ENCODE measurements at regions of chr7 and their contacts with region 1.

Region 1: DNA sequence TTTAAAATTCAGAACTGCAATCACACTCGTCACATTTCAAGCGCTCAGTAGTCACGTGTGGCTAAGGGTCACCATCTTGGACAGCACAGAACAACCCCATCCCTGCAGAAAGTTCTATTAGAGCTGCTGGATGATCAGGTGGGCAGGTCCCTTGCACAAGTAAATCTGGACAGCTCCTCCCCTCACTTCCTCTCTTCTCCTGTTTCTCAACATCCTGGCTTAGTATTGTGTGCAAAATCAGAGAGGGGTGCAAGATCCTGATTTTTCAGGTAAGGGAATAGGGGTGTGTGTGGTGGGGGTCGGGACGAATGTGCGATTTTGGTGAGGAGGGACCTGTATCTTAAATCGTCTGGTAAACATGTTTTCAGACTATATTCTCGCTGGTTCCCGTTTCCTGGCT is at the start of gene GIMAP4:
- DNase-seq: peak; percentile 55
- H3K4me3 Mint-ChIP-seq: peak within 1 kb of the TSS; percentile 94
- H3K27ac Mint-ChIP-seq: peak within 1 kb of the TSS; percentile 98
- H3K4me1 Mint-ChIP-seq: peaks cover 65% of the 10 kb centered on the region
- H3K27me3 Mint-ChIP-seq: no peaks in the 10 kb centered on the region
- total RNA-seq, gene GIMAP4: 128 to 140 TPM

Region 2: DNA sequence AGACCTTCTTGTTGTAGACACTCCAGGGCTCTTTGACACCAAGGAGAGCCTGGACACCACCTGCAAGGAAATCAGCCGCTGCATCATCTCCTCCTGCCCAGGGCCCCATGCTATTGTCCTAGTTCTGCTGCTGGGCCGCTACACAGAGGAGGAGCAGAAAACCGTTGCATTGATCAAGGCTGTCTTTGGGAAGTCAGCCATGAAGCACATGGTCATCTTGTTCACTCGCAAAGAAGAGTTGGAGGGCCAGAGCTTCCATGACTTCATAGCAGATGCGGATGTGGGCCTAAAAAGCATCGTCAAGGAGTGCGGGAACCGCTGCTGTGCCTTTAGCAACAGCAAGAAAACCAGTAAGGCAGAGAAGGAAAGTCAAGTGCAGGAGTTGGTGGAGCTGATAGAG is 47.0 kb before region 1 on chr7:
- CTCF ChIA-PET with region 1: interaction called, 3 read pairs
- POLR2A ChIA-PET with region 1: interaction called, 26 read pairs
- intact Hi-C with region 1: loop called (anchors 1 kb)
- DNase-seq: peak; percentile 64
- H3K4me3 Mint-ChIP-seq: peak overlapping the region; percentile 83
- H3K27ac Mint-ChIP-seq: peak overlapping the region; percentile 97
- H3K4me1 Mint-ChIP-seq: peaks cover 45% of the 10 kb centered on the region
- H3K27me3 Mint-ChIP-seq: no peaks in the 10 kb centered on the region

Region 3: DNA sequence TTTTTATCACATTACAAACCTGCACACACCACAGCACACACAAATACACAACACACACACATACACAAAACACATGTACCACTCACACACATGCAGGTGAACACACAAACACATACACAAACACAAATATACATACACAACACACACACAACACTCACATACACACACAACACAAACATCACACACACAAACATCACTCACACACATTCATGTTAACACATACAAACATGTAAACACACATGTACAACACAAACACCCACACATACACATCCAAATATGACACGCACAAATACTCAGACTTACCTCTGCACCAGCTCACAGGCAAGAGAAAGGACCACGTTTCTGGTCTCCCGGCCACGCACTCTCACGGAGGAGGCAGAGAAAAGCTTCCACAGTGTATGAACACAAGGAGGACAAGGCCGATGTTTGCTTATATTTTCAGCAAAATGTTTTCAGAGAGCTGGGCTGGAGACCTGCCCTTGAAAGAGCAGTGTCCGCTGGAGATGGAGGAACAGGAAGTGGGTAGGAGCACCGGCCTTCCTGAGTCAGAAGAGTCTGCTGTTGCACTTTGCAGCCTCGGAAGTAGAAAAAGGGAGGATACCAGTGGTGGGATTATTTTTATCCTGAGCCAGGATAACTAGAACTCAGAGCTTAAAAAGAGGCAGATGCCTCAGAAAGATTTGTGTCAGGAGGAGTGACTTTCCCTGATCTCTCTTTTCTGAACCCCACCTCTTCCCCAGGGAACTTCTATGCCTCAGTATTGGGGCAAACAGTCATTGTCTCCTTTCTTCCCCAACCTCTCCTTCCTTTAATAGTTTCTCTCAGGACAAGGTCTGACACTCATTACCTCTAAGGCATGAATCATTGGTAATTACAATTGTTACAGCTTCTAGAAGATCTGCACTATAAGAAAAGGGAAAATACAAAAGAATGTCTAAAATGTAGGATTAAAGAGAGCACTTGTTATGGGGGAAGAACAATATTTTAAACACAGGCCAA is 65.0 kb after region 1 on chr7 and contains the start of gene GIMAP6:
- CTCF ChIA-PET with region 1: no interaction called
- POLR2A ChIA-PET with region 1: interaction called, 7 read pairs
- intact Hi-C with region 1: loop called (anchors 2 kb)
- DNase-seq: peak; percentile 62
- H3K4me3 Mint-ChIP-seq: peak within 1 kb of the TSS; percentile 93
- H3K27ac Mint-ChIP-seq: peak within 1 kb of the TSS; percentile 97
- H3K4me1 Mint-ChIP-seq: peaks cover 76% of the 10 kb centered on the region
- H3K27me3 Mint-ChIP-seq: no peaks in the 10 kb centered on the region
- total RNA-seq, gene GIMAP6: 28.9 to 30.2 TPM